ENCODE measurements at regions of chr6 and their contacts with region 1.

Region 1: GRCh38 chr6:133923938-133924593 is 29.0 kb upstream of the TBPL1 start:
- DNase-seq: peak; percentile 56 to 62 (median 57)
- H3K4me3 ChIP-seq: no peak overlapping the region
- H3K4me3 Mint-ChIP-seq: no peak overlapping the region
- H3K27ac ChIP-seq: no peak overlapping the region
- H3K27ac Mint-ChIP-seq: no peak overlapping the region
- H3K4me1 ChIP-seq: no peaks in the 10 kb centered on the region
- H3K4me1 Mint-ChIP-seq: no peaks in the 10 kb centered on the region
- H3K27me3 ChIP-seq: no peaks in the 10 kb centered on the region
- H3K27me3 Mint-ChIP-seq: peaks cover 15 to 21% of the 10 kb centered on the region in 2 donors

Region 2: DNA sequence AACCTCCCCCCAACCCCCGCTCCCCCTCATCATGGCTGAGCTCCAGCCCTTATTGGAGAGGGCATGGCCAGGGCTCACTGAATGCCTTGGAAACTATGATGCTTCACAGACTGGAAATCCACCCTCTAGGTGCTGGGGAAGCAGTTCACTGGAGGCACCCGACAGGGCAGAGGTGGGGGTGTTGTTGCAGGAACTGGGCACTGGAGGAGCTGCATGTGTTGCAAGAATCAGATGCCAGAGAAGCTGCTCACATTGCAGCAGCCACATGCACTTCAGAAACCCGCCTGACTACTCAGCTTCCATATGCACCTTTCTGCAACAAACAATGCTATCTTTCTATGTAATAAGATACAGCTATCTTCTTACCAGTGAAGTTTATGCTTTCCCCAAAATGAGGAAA is 21.1 kb after region 1 on chr6:
- CTCF ChIA-PET with region 1: interaction called, 18 read pairs
- POLR2A ChIA-PET with region 1: no interaction called
- intact Hi-C with region 1: no loop called
- DNase-seq: no peak
- H3K4me3 ChIP-seq: no peak overlapping the region
- H3K4me3 Mint-ChIP-seq: no peak overlapping the region
- H3K27ac ChIP-seq: no peak overlapping the region
- H3K27ac Mint-ChIP-seq: no peak overlapping the region
- H3K4me1 ChIP-seq: no peaks in the 10 kb centered on the region
- H3K4me1 Mint-ChIP-seq: no peaks in the 10 kb centered on the region
- H3K27me3 ChIP-seq: no peaks in the 10 kb centered on the region
- H3K27me3 Mint-ChIP-seq: peaks cover 6 to 8% of the 10 kb centered on the region in 2 donors

Region 3: GRCh38 chr6:133966654-133967329 is 42.7 kb after region 1 on chr6:
- CTCF ChIA-PET with region 1: interaction called, 25 read pairs
- POLR2A ChIA-PET with region 1: no interaction called
- intact Hi-C with region 1: no loop called
- DNase-seq: no peak
- H3K4me3 ChIP-seq: no peak overlapping the region
- H3K4me3 Mint-ChIP-seq: peak overlapping the region in 1 of 8 donors; percentile 7
- H3K27ac ChIP-seq: no peak overlapping the region
- H3K27ac Mint-ChIP-seq: peak overlapping the region in 5 of 7 donors; percentile 6 to 74 (median 24)
- H3K4me1 ChIP-seq: peaks cover 72% of the 10 kb centered on the region
- H3K4me1 Mint-ChIP-seq: peaks cover 47 to 78% (median 65%) of the 10 kb centered on the region in 4 donors
- H3K27me3 ChIP-seq: no peaks in the 10 kb centered on the region
- H3K27me3 Mint-ChIP-seq: no peaks in the 10 kb centered on the region

Region 4: GRCh38 chr6:133983099-133983939 is 59.3 kb after region 1 on chr6:
- CTCF ChIA-PET with region 1: interaction called, 28 read pairs
- POLR2A ChIA-PET with region 1: interaction called, 3 read pairs
- intact Hi-C with region 1: no loop called
- DNase-seq: peak; percentile 21 to 68 (median 30)
- H3K4me3 ChIP-seq: no peak overlapping the region
- H3K4me3 Mint-ChIP-seq: peak overlapping the region; percentile 22 to 75 (median 46)
- H3K27ac ChIP-seq: no peak overlapping the region
- H3K27ac Mint-ChIP-seq: peak overlapping the region; percentile 10 to 72 (median 44)
- H3K4me1 ChIP-seq: peaks cover 29% of the 10 kb centered on the region
- H3K4me1 Mint-ChIP-seq: peaks cover 24 to 52% (median 39%) of the 10 kb centered on the region in 4 donors
- H3K27me3 ChIP-seq: no peaks in the 10 kb centered on the region
- H3K27me3 Mint-ChIP-seq: no peaks in the 10 kb centered on the region